Sigmoid colon (tissue), 7 donors: ENCODE measurements at regions of chr14 and their contacts with region 1.

Region 1: DNA sequence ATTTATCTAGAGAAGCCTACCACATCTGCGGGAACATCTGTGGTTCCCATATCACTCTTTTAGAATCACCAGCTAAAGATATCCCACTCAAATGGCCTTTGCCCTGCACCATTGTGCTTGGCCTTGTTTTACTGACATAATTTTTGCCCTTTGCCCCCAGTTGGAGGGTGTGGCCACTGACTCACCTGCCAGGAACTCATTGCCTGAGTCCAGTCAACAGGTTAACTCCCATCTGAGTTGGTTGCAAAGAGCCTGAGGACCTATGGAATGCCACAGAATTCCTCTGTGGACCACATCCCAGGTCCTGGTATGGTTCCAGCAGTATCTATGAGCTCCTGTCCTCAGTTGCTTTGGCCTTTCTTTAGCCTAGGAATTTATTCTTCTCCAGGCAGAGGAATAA is 55.7 kb upstream of the PTGR2 start:
- DNase-seq: peak; percentile 43
- H3K4me3 ChIP-seq: no peak overlapping the region
- H3K27ac ChIP-seq: peak overlapping the region in 2 of 4 donors; percentile 65 to 98
- H3K4me1 ChIP-seq: peaks cover 0 to 41% (median 22%) of the 10 kb centered on the region in 4 donors
- H3K27me3 ChIP-seq: no peaks in the 10 kb centered on the region
- CTCF ChIP-seq: no peak
- EP300 ChIP-seq: no peak
- POLR2A ChIP-seq: no peak

Region 2: GRCh38 chr14:73591690-73592448 is 204.1 kb before region 1 on chr14 and contains the start of gene ACOT4:
- intact Hi-C with region 1: no loop called
- DNase-seq: peak; percentile 58
- H3K4me3 ChIP-seq: peak within 1 kb of the TSS; percentile 38 to 59 (median 58)
- H3K27ac ChIP-seq: peak within 1 kb of the TSS in 1 of 4 donors; percentile 11
- H3K4me1 ChIP-seq: peaks cover 0 to 11% (median 10%) of the 10 kb centered on the region in 4 donors
- H3K27me3 ChIP-seq: no peaks in the 10 kb centered on the region
- CTCF ChIP-seq: no peak
- EP300 ChIP-seq: no peak
- POLR2A ChIP-seq: no peak
- total RNA-seq, gene ACOT4: 0.33 to 2.2 (median 0.45) TPM

Region 3: GRCh38 chr14:73728717-73729330 is 67.1 kb before region 1 on chr14:
- intact Hi-C with region 1: loop called (anchors 2 kb)
- DNase-seq: peak; percentile 92
- H3K4me3 ChIP-seq: no peak overlapping the region
- H3K27ac ChIP-seq: peak overlapping the region; percentile 68 to 99 (median 88)
- H3K4me1 ChIP-seq: peaks cover 0 to 82% (median 68%) of the 10 kb centered on the region in 4 donors
- H3K27me3 ChIP-seq: no peaks in the 10 kb centered on the region
- CTCF ChIP-seq: peak; percentile 91 to 98 (median 96)
- EP300 ChIP-seq: no peak
- POLR2A ChIP-seq: no peak